H1 (cell line): ENCODE measurements at regions of chr15 and their contacts with region 1.

Region 1: DNA sequence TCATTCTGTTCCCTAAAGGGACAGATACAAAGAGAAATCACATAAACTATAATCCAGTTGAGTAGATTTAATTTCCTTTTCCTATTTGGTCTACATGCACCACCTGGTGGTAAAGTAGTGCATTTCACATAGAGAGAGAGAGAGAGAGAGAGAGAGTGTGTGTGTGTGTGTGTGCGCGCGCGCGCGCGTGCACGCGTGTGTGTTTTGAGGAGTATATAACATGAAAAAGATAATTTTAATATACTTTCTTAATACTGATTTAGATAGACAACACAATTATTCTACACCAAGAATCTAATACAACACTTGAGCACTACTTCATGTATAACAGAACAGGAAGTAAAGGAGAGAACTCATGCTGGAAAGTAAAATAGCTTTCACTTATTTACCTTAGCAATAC is 1.1 kb upstream of the FGF7 start:
- DNase-seq: no peak
- H3K4me3 ChIP-seq: no peak overlapping the region
- H3K27ac ChIP-seq: no peak overlapping the region
- H3K4me1 ChIP-seq: peaks cover 0 to 3% (median 0%) of the 10 kb centered on the region in 4 experiments; a peak in 1 of 7 replicates
- H3K27me3 ChIP-seq: no peaks in the 10 kb centered on the region
- CTCF ChIP-seq: peak; percentile 19 to 68 (median 48); a peak in 3 of 4 replicates
- EP300 ChIP-seq: no peak
- POLR2A ChIP-seq: no peak
- RAD21 ChIP-seq: peak; percentile 82 to 87

Region 2: DNA sequence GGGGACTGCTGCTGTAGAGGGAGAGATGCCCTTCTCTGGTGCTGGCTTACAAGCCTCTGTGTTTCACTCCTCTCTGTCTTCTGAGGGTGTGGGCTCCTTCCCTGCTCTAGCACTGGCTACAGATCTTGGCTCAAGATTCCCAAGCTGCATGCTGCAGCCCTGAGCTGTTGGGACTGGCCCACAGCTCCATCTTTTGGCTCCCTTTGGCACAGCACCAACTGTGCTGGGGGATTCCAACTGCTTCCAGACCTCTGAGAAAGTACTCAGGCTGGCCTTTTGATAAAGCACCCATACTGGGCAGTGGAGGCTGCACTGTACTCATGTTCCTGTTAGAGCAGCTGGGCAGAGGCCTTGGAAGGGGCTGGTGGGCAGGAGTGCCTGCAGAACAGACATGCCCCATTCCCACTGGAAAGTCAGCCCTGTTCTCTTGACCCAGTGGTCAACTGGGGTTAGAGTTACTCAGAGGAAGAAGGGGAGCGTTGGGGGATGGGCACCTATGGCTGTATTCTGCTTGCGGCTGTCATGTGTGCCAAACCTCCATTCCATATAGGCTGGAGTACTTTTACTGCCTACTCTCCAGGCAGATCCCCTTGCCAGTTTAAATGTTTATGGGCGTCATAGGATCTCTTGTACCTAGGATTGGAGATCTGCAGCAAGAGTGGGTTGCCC is 196.2 kb before region 1 on chr15:
- CTCF ChIA-PET with region 1: interaction called, 21 read pairs
- POLR2A ChIA-PET with region 1: no interaction called
- DNase-seq: peak; percentile 71 to 78
- H3K4me3 ChIP-seq: no peak overlapping the region
- H3K27ac ChIP-seq: no peak overlapping the region
- H3K4me1 ChIP-seq: peaks cover 0 to 5% (median 1%) of the 10 kb centered on the region in 4 experiments; a peak in 1 of 7 replicates
- H3K27me3 ChIP-seq: no peaks in the 10 kb centered on the region
- CTCF ChIP-seq: peak; percentile 82 to 93 (median 87)
- EP300 ChIP-seq: no peak
- POLR2A ChIP-seq: no peak
- RAD21 ChIP-seq: peak; percentile 87 to 92

Region 3: GRCh38 chr15:49242820-49243219 is 179.2 kb before region 1 on chr15:
- CTCF ChIA-PET with region 1: interaction called, 153 read pairs
- POLR2A ChIA-PET with region 1: no interaction called
- DNase-seq: no peak
- H3K4me3 ChIP-seq: no peak overlapping the region
- H3K27ac ChIP-seq: no peak overlapping the region
- H3K4me1 ChIP-seq: peaks cover 0 to 2% (median 0%) of the 10 kb centered on the region in 4 experiments; a peak in 1 of 7 replicates
- H3K27me3 ChIP-seq: no peaks in the 10 kb centered on the region
- CTCF ChIP-seq: no peak
- EP300 ChIP-seq: no peak
- POLR2A ChIP-seq: no peak
- RAD21 ChIP-seq: no peak

Region 4: GRCh38 chr15:49290191-49290590 is 131.8 kb before region 1 on chr15:
- CTCF ChIA-PET with region 1: interaction called, 12 read pairs
- POLR2A ChIA-PET with region 1: no interaction called
- DNase-seq: no peak
- H3K4me3 ChIP-seq: no peak overlapping the region
- H3K27ac ChIP-seq: no peak overlapping the region
- H3K4me1 ChIP-seq: peaks cover 0 to 5% (median 0%) of the 10 kb centered on the region in 4 experiments; a peak in 1 of 7 replicates
- H3K27me3 ChIP-seq: no peaks in the 10 kb centered on the region
- CTCF ChIP-seq: no peak
- EP300 ChIP-seq: no peak
- POLR2A ChIP-seq: no peak
- RAD21 ChIP-seq: no peak

Region 5: GRCh38 chr15:49387471-49387870 is 34.5 kb before region 1 on chr15:
- CTCF ChIA-PET with region 1: no interaction called
- POLR2A ChIA-PET with region 1: no interaction called
- DNase-seq: no peak
- H3K4me3 ChIP-seq: no peak overlapping the region
- H3K27ac ChIP-seq: no peak overlapping the region
- H3K4me1 ChIP-seq: peaks cover 0 to 9% (median 5%) of the 10 kb centered on the region in 4 experiments; a peak in 4 of 7 replicates
- H3K27me3 ChIP-seq: no peaks in the 10 kb centered on the region
- CTCF ChIP-seq: no peak
- EP300 ChIP-seq: no peak
- POLR2A ChIP-seq: no peak
- RAD21 ChIP-seq: no peak

Region 6: DNA sequence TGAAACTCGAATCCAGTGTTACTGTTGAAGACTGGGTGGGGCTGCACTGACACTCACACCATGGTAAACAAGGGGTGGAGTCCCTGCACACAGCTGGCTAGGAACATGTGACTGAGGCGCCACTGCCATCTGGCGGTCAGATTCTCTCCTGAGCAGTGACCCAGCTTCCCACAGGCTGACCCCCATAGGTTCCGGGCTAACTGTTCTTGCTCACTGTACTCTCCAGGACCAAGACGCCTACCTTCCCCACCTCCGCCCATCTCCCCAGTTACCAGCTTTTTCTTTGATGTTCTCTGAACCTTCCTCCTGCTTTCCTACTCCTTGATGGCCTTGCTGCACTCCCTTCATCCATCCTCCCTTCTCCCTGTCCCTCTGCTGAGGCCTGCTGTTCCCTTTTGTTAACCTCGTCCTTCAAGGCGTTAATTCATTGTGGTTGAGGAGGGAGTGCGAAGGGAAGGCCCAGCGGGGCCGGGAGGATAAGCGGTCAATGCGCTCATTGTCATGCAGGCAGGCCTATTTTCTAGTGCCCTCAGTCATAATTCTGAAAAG is 581.9 kb after region 1 on chr15:
- CTCF ChIA-PET with region 1: interaction called, 14 read pairs
- POLR2A ChIA-PET with region 1: no interaction called
- DNase-seq: peak; percentile 86 to 92
- H3K4me3 ChIP-seq: peak overlapping the region in 1 of 4 experiments; percentile 41; a peak in 2 of 8 replicates
- H3K27ac ChIP-seq: no peak overlapping the region
- H3K4me1 ChIP-seq: peaks cover 0 to 4% (median 1%) of the 10 kb centered on the region in 4 experiments; a peak in 1 of 7 replicates
- H3K27me3 ChIP-seq: no peaks in the 10 kb centered on the region; a peak in 1 of 7 replicates
- CTCF ChIP-seq: peak; percentile 82 to 97 (median 95)
- EP300 ChIP-seq: no peak
- POLR2A ChIP-seq: no peak
- RAD21 ChIP-seq: peak; percentile 87 to 89